Heart left ventricle (tissue), 16 donors: ENCODE measurements at regions of chr1 and their contacts with region 1.

Region 1: GRCh38 chr1:53182111-53182593 is 14.5 kb upstream of the CPT2 start:
- DNase-seq: peak; percentile 75 to 87 (median 80)
- ATAC-seq: peak in 3 of 4 donors; percentile 31 to 75 (median 60)
- H3K4me3 ChIP-seq: no peak overlapping the region
- H3K27ac ChIP-seq: peak overlapping the region in 3 of 12 donors; percentile 16 to 45 (median 32)
- H3K4me1 ChIP-seq: peaks cover 0 to 23% (median 6%) of the 10 kb centered on the region in 12 donors
- H3K27me3 ChIP-seq: no peaks in the 10 kb centered on the region
- CTCF ChIP-seq: peak; percentile 77 to 94 (median 89)
- POLR2A ChIP-seq: no peak

Region 2: GRCh38 chr1:52702886-52703787 is 479.0 kb before region 1 on chr1:
- intact Hi-C with region 1: loop called in 4 of 10 experiments (anchors 2 to 10 kb)
- DNase-seq: peak; percentile 90 to 94 (median 91)
- ATAC-seq: peak; percentile 90 to 94 (median 93)
- H3K4me3 ChIP-seq: peak overlapping the region in 11 of 12 donors; percentile 39 to 74 (median 61)
- H3K27ac ChIP-seq: peak overlapping the region; percentile 75 to 91 (median 86)
- H3K4me1 ChIP-seq: peaks cover 0 to 43% (median 8%) of the 10 kb centered on the region in 12 donors
- H3K27me3 ChIP-seq: no peaks in the 10 kb centered on the region
- CTCF ChIP-seq: no peak
- POLR2A ChIP-seq: peak in 1 of 2 donors; percentile 67

Region 3: DNA sequence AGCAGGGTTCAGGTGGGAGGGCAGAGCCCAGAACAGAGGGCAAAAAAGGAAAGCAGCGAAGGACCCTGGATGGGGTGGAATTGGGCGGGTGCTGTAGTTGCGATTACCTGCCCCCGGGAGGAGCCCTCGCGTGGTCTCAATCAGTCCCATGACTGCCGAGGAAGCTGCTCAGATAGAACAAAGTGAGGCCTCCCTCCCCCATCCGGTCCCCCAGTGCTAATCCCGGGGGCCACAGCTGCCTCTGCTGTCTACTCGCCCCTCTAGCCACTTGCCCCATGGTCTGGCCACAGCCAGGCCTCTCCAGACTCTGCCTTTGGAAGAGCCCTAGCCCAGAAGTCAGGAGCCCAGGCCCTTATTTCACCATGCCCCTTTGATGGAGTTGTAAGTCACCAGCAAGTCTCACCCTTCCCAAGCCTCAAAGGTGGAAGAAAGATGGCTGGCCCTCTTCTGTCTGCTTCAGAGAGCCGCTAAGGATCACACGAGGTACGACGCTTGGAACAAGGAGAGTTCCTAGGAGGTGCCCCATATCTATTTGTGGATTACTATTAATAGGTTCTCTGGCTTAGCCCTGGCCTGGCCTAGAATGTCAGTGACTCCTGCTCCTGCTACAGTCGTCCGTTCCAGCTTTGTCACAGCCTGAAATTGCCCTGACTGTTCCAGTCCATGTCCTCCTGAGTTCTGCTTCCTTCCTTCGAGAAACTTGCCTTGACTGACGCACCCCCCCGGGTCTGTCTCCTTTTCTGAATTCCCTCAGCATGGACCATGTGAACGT is 277.0 kb before region 1 on chr1:
- intact Hi-C with region 1: loop called in 7 of 10 experiments (anchors 5 to 10 kb)
- DNase-seq: peak in 4 of 5 donors; percentile 50 to 76 (median 65)
- ATAC-seq: peak; percentile 95 to 96 (median 96)
- H3K4me3 ChIP-seq: no peak overlapping the region
- H3K27ac ChIP-seq: peak overlapping the region; percentile 63 to 94 (median 80)
- H3K4me1 ChIP-seq: peaks cover 0 to 29% (median 13%) of the 10 kb centered on the region in 12 donors
- H3K27me3 ChIP-seq: no peaks in the 10 kb centered on the region
- CTCF ChIP-seq: peak in 8 of 12 donors; percentile 16 to 50 (median 28)
- POLR2A ChIP-seq: no peak

Region 4: DNA sequence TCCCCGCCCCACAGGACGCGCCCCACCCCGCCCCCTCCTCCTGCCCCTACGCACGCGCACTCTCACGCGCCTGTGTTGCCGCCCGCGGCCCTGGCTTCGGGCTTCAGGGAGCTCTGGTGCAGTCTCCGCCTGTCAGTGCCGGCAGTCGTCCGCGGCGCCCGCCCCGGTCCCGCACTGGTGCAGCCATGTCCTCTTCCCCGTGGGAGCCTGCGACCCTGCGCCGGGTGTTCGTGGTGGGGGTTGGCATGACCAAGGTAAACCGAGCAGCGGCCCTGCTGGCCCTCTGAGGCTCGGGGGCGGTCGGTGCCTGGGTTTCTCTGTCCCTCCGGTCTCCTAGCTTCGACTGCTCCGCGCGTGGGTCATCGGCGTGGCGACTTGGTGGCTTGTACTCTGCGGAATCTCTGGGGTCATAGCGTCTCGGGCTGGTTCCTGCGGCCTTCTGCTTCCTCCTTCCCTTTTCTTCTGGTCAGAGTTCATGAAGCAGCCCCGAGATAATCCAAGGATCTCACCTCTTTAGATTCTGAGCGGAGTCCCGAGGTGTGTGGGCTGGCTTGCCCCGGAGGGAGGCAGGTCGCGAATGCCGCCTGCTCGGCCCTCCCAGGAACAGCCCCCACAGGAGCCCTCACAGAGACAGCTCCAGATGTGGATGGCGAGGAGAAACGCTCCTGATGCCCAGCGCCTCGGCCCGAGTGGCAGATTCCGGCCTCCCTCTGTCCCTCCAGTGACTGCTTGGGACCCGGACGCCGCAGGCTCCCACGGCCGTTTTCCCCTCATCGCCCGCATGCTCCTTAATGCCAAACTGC is 254.7 kb before region 1 on chr1 and contains the start of gene SCP2:
- intact Hi-C with region 1: loop called in 4 of 10 experiments (anchors 2 to 10 kb)
- DNase-seq: peak; percentile 86 to 94 (median 88)
- ATAC-seq: peak; percentile 89 to 97 (median 96)
- H3K4me3 ChIP-seq: peak within 1 kb of the TSS; percentile 43 to 90 (median 80)
- H3K27ac ChIP-seq: peak within 1 kb of the TSS; percentile 57 to 93 (median 82)
- H3K4me1 ChIP-seq: peaks cover 0 to 33% (median 16%) of the 10 kb centered on the region in 12 donors
- H3K27me3 ChIP-seq: no peaks in the 10 kb centered on the region
- CTCF ChIP-seq: no peak
- POLR2A ChIP-seq: peak in 1 of 2 donors; percentile 64
- total RNA-seq, gene SCP2: 83.4 to 143 (median 132) TPM

Region 5: GRCh38 chr1:53061859-53062707 is 120.1 kb before region 1 on chr1 and contains the start of gene PODN:
- intact Hi-C with region 1: loop called in 4 of 10 experiments (anchors 5 to 10 kb)
- DNase-seq: peak in 4 of 5 donors; percentile 40 to 75 (median 60)
- ATAC-seq: peak; percentile 4 to 50 (median 35)
- H3K4me3 ChIP-seq: peak within 1 kb of the TSS; percentile 55 to 89 (median 71)
- H3K27ac ChIP-seq: peak within 1 kb of the TSS; percentile 34 to 90 (median 76)
- H3K4me1 ChIP-seq: peaks cover 0 to 49% (median 18%) of the 10 kb centered on the region in 12 donors
- H3K27me3 ChIP-seq: peaks cover 0 to 28% (median 3%) of the 10 kb centered on the region in 9 donors
- CTCF ChIP-seq: no peak
- POLR2A ChIP-seq: no peak
- total RNA-seq, gene PODN: 5.9 to 61.8 (median 18.5) TPM

Region 6: DNA sequence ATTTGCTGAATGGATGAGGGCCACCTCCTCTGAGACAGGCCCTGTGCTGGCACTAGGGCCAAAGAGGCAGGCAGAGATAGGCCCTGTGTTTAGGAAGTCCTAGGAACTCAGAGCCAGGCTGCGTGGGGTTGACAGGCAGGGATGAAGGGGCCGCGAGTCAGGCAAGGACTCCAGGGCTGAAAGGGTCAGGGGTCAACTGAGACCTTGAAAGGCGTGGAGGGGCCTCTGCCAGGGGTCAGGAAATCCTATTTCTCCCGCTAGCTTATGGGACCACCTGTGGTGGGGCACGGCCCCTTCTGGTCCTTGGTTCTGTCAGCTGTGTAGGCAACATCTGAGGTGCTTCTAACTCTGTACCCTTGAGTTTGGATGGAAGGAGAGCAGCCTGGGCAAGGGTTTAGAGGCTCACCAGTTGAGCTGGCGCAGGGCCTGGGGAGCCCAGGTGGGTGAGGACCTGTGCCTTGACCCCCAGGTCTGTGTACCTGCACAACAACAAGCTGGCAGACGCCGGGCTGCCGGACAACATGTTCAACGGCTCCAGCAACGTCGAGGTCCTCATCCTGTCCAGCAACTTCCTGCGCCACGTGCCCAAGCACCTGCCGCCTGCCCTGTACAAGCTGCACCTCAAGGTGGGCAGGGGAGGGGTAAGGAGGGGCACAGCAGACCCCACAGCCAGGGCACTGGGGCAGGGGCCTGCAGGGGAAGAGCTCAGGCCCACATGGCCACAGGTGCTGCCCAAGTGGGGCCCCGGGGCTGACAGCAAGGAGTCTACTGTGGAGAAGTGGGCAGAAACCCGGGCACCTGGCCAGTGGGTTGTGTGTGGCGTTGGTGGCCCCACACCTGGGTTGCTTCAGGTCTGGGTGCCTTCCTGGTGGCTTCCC is 105.2 kb before region 1 on chr1:
- intact Hi-C with region 1: no loop called
- DNase-seq: peak in 3 of 5 donors; percentile 23 to 55 (median 26)
- ATAC-seq: no peak
- H3K4me3 ChIP-seq: no peak overlapping the region
- H3K27ac ChIP-seq: no peak overlapping the region
- H3K4me1 ChIP-seq: peaks cover 0 to 19% (median 0%) of the 10 kb centered on the region in 12 donors
- H3K27me3 ChIP-seq: no peaks in the 10 kb centered on the region
- CTCF ChIP-seq: no peak
- POLR2A ChIP-seq: no peak

Region 7: DNA sequence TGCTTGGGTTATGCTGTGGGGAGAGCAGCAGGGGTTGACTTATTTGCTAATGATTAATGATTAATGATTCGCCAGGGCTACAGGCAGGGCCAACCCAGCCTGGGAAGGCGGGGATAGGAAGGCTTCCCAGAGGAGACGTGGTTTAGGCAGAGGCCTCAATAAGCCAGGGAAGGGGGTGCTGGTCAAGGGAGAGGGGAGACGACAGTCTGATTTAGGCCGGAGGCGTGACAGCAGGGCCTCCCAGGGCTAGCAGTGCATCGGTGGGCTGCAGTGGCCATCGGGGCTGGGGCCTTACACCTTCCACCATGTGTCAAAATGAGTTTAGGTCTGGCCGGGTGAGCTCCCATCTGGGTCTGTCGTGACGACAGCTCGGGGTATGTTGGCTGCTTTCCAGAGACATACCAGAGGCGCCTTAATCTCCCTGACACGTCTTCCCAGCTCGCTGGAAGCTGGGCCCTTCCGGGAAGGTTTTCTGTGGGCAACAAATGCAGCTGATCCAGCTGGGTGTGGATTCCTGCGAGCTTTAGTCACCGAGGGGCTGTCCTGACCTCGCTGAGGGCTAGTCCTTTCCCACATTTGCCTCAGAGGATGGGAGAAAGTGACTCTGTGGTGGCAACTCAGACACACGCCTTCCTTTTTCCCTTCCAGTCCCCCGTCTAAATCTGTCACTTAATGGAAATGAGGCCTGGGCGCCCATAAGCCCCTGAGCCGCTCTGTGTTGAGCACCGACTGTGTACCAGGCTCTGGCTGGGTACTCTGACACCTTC is 36.0 kb before region 1 on chr1:
- intact Hi-C with region 1: no loop called
- DNase-seq: peak; percentile 33 to 81 (median 72)
- ATAC-seq: peak; percentile 40 to 95 (median 80)
- H3K4me3 ChIP-seq: no peak overlapping the region
- H3K27ac ChIP-seq: peak overlapping the region in 10 of 12 donors; percentile 30 to 83 (median 50)
- H3K4me1 ChIP-seq: peaks cover 0 to 38% (median 7%) of the 10 kb centered on the region in 12 donors
- H3K27me3 ChIP-seq: no peaks in the 10 kb centered on the region
- CTCF ChIP-seq: no peak
- POLR2A ChIP-seq: no peak